Transverse colon (tissue), 4 donors: ENCODE measurements at regions of chr18 and their contacts with region 1.

Region 1: GRCh38 chr18:31546476-31546875 is 45.2 kb upstream of the TTR start:
- DNase-seq: no peak
- H3K4me3 ChIP-seq: no peak overlapping the region
- H3K27ac ChIP-seq: no peak overlapping the region
- H3K4me1 ChIP-seq: peaks cover 0 to 19% (median 0%) of the 10 kb centered on the region in 4 donors
- H3K27me3 ChIP-seq: no peaks in the 10 kb centered on the region
- CTCF ChIP-seq: no peak
- EP300 ChIP-seq: no peak
- POLR2A ChIP-seq: no peak

Region 2: GRCh38 chr18:31920277-31920676 is 373.8 kb after region 1 on chr18:
- in situ Hi-C with region 1: loop called in 1 of 4 experiments (anchors 25 kb)
- intact Hi-C with region 1: no loop called
- DNase-seq: no peak
- H3K4me3 ChIP-seq: no peak overlapping the region
- H3K27ac ChIP-seq: no peak overlapping the region
- H3K4me1 ChIP-seq: no peaks in the 10 kb centered on the region
- H3K27me3 ChIP-seq: no peaks in the 10 kb centered on the region
- CTCF ChIP-seq: no peak
- EP300 ChIP-seq: no peak
- POLR2A ChIP-seq: no peak

Region 3: DNA sequence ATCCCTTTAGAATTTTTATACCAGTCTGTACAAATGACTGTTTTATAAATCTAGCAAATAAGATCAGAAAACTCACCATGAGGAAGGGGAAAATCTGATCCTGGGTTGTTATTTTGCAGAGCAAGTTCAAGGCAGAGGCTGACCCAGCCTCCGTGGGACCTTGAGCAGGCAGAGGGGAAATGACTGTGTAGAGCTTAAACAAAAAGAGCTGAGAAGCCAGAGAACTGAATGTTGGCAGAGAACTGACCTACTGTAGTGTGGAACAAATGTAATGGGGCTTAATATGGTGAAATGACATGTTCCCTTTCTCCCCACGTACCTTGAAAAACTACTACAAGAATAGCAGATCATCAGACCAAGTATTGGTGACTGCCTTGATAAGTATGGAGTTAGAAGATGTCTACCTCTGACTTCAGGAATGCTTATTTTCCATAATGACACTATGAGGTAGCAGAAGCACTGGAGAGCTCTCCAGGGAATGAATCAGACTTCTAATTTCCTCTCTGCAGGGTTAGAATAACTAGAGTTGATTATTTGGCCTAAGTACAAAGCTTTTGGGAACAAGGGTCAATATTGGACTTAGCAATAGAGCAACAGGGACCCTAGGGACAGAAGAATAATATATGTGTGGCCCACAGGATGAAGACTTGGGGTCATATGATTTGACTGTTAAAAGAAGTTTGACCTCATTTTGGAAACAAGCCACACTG is 1589.6 kb after region 1 on chr18:
- in situ Hi-C with region 1: no loop called
- intact Hi-C with region 1: no loop called
- DNase-seq: no peak
- H3K4me3 ChIP-seq: no peak overlapping the region
- H3K27ac ChIP-seq: no peak overlapping the region
- H3K4me1 ChIP-seq: no peaks in the 10 kb centered on the region
- H3K27me3 ChIP-seq: no peaks in the 10 kb centered on the region
- CTCF ChIP-seq: no peak
- EP300 ChIP-seq: no peak
- POLR2A ChIP-seq: no peak